Activated T-helper 1 cell treated with anti-CD3 and anti-CD28 coated beads, Interleukin-12 subunit alpha, Interleukin-12 subunit beta, Interleukin-2, Interleukin-4 antibody, amounts not matched to agents 30 ng/mL and 10 ng/mL and 1 ng/mL, durations not matched to agents 14 hours and 24 hours and 36 hours (primary cell): ENCODE measurements at regions of chr5 and their contacts with region 1.

Region 1: DNA sequence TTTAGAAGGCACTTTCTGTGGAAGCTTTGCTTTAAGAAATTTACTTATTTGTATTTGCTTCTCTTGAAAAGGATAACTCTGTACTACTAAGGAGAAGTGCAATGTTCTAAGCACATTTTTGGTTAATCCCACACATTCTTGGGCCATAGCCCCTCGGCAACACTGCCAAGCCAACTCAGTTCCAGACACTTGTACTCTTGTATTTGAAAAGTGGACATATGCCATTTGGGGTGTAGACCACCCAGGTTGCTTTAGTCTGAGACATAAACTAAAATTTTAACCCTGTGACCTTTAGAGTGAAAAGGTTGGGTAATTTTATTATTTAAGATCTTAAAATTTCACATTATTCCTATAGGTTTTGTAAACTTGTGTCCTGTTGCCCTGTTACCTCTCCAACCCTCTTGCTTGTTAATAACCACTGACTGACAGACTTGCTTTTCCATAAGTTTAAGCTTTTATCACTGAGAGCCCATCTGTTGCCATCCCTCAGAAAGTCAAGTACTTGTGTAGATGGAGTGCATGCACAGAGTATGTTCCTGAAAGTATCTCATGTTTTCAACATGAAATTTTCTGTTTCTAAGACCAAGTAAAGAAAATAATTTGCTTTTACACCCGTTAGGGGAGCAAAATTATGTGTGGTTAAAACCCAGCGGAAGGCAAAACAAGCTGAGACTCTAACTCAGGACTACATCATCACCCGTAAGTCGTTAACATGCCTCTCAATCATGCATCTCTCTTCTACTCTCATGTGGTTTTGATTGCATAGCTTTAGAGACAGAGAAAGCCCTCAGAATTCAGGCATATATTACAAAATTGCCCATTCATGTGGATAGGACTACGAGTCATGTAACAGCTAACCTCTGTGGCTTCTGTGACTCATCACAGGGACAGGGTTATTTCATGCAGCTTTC is 117.3 kb downstream of the GDNF start:
- DNase-seq: peak; percentile 53
- H3K4me3 Mint-ChIP-seq: peak overlapping the region; percentile 77
- H3K27ac Mint-ChIP-seq: peak overlapping the region; percentile 95
- H3K4me1 Mint-ChIP-seq: peaks cover 42% of the 10 kb centered on the region
- H3K27me3 Mint-ChIP-seq: no peaks in the 10 kb centered on the region

Region 2: GRCh38 chr5:35785601-35786085 is 1936.8 kb before region 1 on chr5:
- intact Hi-C with region 1: loop called (anchors 5 kb)
- DNase-seq: peak; percentile 30
- H3K4me3 Mint-ChIP-seq: peak overlapping the region; percentile 24
- H3K27ac Mint-ChIP-seq: peak overlapping the region; percentile 86
- H3K4me1 Mint-ChIP-seq: peaks cover 90% of the 10 kb centered on the region
- H3K27me3 Mint-ChIP-seq: no peaks in the 10 kb centered on the region

Region 3: GRCh38 chr5:36241631-36242533 is 1480.6 kb before region 1 on chr5 and contains the start of gene NADK2:
- intact Hi-C with region 1: loop called (anchors 2 kb)
- DNase-seq: peak; percentile 93
- H3K4me3 Mint-ChIP-seq: peak within 1 kb of the TSS; percentile 90
- H3K27ac Mint-ChIP-seq: peak within 1 kb of the TSS; percentile 96
- H3K4me1 Mint-ChIP-seq: peaks cover 39% of the 10 kb centered on the region
- H3K27me3 Mint-ChIP-seq: peaks cover 4% of the 10 kb centered on the region
- total RNA-seq, gene NADK2: 21.7 and 25.1 TPM in 2 replicates

Region 4: DNA sequence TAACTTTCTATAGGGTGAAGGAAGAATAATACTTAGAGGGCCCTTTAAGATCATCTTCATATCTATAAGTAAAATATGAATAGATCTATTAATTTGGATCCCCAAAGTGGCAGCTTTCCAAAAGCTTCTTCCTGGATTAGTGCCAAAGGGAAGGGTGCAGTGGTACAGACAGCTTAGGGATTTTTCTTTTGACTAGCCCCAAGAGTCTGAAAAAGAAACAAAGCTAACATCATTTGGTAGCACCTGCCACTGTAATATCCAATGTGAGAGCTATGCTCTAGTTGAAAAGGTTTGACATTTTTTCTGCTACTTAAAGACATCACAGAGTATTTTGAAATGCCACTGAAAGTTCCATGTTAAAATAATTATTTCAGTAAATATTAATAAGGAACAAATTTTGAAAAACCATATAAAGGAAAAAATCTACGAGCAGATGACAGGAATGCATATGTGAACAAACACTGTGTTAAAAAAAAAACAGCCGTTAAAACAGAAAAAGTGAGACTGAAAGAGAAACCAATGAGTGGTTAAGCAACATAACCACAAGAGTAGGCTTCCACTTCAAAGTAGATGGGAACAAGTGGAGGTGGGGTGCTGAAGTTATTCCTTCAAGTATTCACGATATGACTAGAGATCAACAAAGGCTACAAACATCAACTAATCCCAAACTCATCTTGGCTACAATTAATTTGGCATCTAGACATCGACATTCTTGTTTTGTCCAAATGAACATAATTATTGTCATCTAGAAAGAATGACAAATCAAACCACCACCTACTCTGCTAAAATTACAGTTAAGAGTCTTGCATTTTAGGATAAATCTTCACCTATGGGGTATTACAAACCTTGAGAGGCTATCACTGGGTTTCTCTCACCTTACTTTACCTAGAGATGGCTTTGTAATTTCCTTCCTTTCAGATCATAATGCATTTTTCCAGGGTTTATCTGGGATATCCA is 610.8 kb before region 1 on chr5:
- intact Hi-C with region 1: loop called (anchors 1 kb)
- DNase-seq: peak; percentile 43
- H3K4me3 Mint-ChIP-seq: peak overlapping the region; percentile 50
- H3K27ac Mint-ChIP-seq: peak overlapping the region; percentile 79
- H3K4me1 Mint-ChIP-seq: peaks cover 42% of the 10 kb centered on the region
- H3K27me3 Mint-ChIP-seq: no peaks in the 10 kb centered on the region

Region 5: DNA sequence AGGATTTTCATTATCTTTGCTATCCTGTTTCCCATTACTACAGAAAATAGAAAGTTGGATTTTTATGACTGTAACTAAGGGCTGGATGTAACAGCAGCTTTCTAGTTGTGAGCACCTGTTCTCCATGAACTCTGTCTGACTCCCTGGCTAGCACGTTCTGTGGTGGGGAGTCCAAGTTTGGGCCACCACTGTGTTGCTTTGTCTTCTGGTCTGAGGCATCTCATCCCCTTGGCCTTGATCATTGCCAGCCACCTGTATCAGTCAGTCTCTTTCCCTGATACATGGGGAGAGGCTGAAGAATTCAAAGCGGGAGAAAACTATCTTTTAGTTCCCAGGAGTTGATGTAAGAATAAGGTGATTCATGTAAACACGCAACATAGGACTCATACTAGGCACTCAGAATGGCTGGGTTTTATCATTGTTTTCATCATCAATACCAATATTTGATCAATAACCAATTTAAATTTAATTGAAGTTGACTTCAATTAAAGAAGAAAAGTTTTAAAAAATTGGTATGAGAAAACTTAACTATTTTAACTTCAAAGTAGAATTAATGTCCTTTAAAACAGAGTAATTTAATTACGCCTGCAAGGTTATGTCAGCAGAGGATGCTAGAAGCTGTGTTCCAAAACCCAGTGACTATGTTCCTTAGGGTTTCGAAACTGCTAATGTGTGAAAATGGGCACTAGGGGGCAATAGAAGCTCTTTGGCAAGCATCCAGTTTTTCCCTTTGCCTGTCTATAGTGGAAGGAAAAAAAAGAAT is 309.8 kb before region 1 on chr5:
- intact Hi-C with region 1: loop called (anchors 5 kb)
- DNase-seq: peak; percentile 11
- H3K4me3 Mint-ChIP-seq: no peak overlapping the region
- H3K27ac Mint-ChIP-seq: no peak overlapping the region
- H3K4me1 Mint-ChIP-seq: no peaks in the 10 kb centered on the region
- H3K27me3 Mint-ChIP-seq: no peaks in the 10 kb centered on the region

Region 6: GRCh38 chr5:37658440-37658839 is 64.1 kb before region 1 on chr5:
- intact Hi-C with region 1: no loop called
- DNase-seq: no peak
- H3K4me3 Mint-ChIP-seq: no peak overlapping the region
- H3K27ac Mint-ChIP-seq: no peak overlapping the region
- H3K4me1 Mint-ChIP-seq: peaks cover 5% of the 10 kb centered on the region
- H3K27me3 Mint-ChIP-seq: no peaks in the 10 kb centered on the region

Region 7: GRCh38 chr5:37668524-37669047 is 53.9 kb before region 1 on chr5:
- intact Hi-C with region 1: loop called (anchors 5 kb)
- DNase-seq: no peak
- H3K4me3 Mint-ChIP-seq: no peak overlapping the region
- H3K27ac Mint-ChIP-seq: no peak overlapping the region
- H3K4me1 Mint-ChIP-seq: peaks cover 18% of the 10 kb centered on the region
- H3K27me3 Mint-ChIP-seq: no peaks in the 10 kb centered on the region

Region 8: GRCh38 chr5:37757980-37758583 is 35.6 kb after region 1 on chr5:
- intact Hi-C with region 1: loop called (anchors 1 kb)
- DNase-seq: no peak
- H3K4me3 Mint-ChIP-seq: no peak overlapping the region
- H3K27ac Mint-ChIP-seq: no peak overlapping the region
- H3K4me1 Mint-ChIP-seq: no peaks in the 10 kb centered on the region
- H3K27me3 Mint-ChIP-seq: no peaks in the 10 kb centered on the region